ENCODE measurements at regions of chr3 and their contacts with region 1.

Region 1: GRCh38 chr3:196624907-196625306 is 14.6 kb upstream of the NRROS start:
- DNase-seq: no peak
- H3K4me3 ChIP-seq: no peak overlapping the region
- H3K27ac ChIP-seq: no peak overlapping the region
- H3K4me1 ChIP-seq: no peaks in the 10 kb centered on the region
- H3K27me3 ChIP-seq: no peaks in the 10 kb centered on the region
- CTCF ChIP-seq: no peak

Region 2: GRCh38 chr3:196684548-196685407 is 59.9 kb after region 1 on chr3:
- dilution Hi-C with region 1: loop called (anchors 5 kb)
- DNase-seq: no peak
- H3K4me3 ChIP-seq: no peak overlapping the region
- H3K27ac ChIP-seq: no peak overlapping the region
- H3K4me1 ChIP-seq: no peaks in the 10 kb centered on the region
- H3K27me3 ChIP-seq: no peaks in the 10 kb centered on the region
- CTCF ChIP-seq: peak; percentile 71 to 78 (median 71)

Measured in keratinocyte (primary cell).